Left ventricle myocardium inferior (tissue), 1 donor: ENCODE measurements at regions of chr4 and their contacts with region 1.

Region 1: DNA sequence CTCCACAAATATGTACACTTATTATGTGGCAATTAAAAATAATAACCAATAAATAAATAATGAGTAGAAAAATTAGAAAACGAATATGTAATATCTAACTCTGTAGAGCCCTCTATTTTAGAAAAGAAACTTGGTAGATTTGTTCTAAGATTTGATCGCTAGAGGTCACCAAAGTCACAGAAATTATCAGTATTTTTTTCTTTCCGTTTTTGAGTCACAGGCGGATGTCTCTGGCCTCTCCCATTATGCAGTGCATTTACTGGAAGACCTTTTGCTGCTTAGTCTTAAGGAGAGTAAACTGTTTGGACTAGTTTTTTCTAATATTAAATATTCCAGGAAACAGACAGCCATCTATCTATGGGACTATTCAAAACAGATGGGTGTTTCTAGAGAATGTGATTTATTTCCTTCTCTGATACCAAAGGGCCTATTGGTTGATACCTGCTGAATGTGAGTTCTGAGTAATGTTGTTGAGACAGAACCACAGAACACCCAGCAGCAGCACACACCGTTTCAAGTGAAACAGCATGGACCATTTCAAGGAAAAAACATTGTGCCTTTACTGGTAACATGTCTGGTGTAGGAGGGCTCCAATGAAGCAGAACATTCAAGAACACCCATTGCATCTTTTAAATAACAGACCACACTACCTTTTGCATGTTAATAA is 34.0 kb upstream of the GYPA start:
- DNase-seq: no peak
- H3K4me3 ChIP-seq: no peak overlapping the region
- H3K27ac ChIP-seq: no peak overlapping the region
- H3K4me1 ChIP-seq: no peaks in the 10 kb centered on the region
- H3K27me3 ChIP-seq: no peaks in the 10 kb centered on the region
- CTCF ChIP-seq: peak; percentile 58

Region 2: DNA sequence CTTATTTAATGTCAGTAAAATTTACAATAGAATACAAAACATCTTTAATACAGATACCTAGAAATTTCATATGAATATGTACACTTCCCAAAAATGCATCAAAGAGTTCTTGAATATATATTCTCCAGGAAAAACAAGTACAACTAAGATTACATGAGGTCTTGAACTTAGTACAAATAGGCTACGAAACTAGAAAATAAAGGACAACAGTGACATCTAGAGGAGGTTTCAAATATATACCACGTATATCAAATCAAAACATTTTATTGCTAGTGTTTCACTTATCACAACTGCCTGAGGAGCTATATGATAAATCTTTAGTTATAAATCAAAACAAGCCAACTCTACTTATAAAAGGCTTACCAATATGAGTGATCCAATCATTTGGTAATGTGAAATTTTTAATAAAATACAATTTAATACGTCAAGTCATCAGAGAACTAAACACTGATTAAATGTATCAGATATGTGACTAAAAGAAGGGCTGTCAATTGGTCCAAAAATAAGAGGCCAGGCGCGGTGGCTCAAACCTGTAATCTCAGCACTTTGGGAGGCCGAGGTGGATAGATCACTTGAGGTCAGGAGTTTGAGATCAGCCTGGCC is 886.9 kb after region 1 on chr4:
- intact Hi-C with region 1: loop called (anchors 10 kb)
- DNase-seq: no peak
- H3K4me3 ChIP-seq: no peak overlapping the region
- H3K27ac ChIP-seq: no peak overlapping the region
- H3K4me1 ChIP-seq: peaks cover 19% of the 10 kb centered on the region
- H3K27me3 ChIP-seq: no peaks in the 10 kb centered on the region
- CTCF ChIP-seq: peak; percentile 62